Endothelial cell of umbilical vein (primary cell): ENCODE measurements at regions of chr11 and their contacts with region 1.

Region 1: GRCh38 chr11:13384908-13385640 is 77.9 kb downstream of the BTBD10 start:
- DNase-seq: peak; percentile 65
- H3K4me3 ChIP-seq: no peak overlapping the region
- H3K27ac ChIP-seq: no peak overlapping the region
- H3K4me1 ChIP-seq: no peaks in the 10 kb centered on the region
- H3K27me3 ChIP-seq: no peaks in the 10 kb centered on the region
- CTCF ChIP-seq: peak; percentile 50 to 58
- POLR2A ChIP-seq: no peak

Region 2: GRCh38 chr11:13183094-13183825 is 201.8 kb before region 1 on chr11:
- CTCF ChIA-PET with region 1: no interaction called
- POLR2A ChIA-PET with region 1: no interaction called
- dilution Hi-C with region 1: no loop called
- intact Hi-C with region 1: loop called (anchors 1 kb)
- DNase-seq: peak; percentile 56
- H3K4me3 ChIP-seq: no peak overlapping the region
- H3K27ac ChIP-seq: no peak overlapping the region
- H3K4me1 ChIP-seq: peaks cover 6% of the 10 kb centered on the region
- H3K27me3 ChIP-seq: peaks cover 8 to 12% of the 10 kb centered on the region in 2 experiments
- CTCF ChIP-seq: peak; percentile 34 to 46
- POLR2A ChIP-seq: no peak

Region 3: GRCh38 chr11:13249996-13250395 is 135.1 kb before region 1 on chr11:
- CTCF ChIA-PET with region 1: interaction called, 14 read pairs
- POLR2A ChIA-PET with region 1: no interaction called
- dilution Hi-C with region 1: no loop called
- intact Hi-C with region 1: no loop called
- DNase-seq: peak; percentile 3
- H3K4me3 ChIP-seq: no peak overlapping the region
- H3K27ac ChIP-seq: no peak overlapping the region
- H3K4me1 ChIP-seq: no peaks in the 10 kb centered on the region
- H3K27me3 ChIP-seq: peaks cover 24 to 25% of the 10 kb centered on the region in 2 experiments
- CTCF ChIP-seq: no peak
- POLR2A ChIP-seq: no peak

Region 4: DNA sequence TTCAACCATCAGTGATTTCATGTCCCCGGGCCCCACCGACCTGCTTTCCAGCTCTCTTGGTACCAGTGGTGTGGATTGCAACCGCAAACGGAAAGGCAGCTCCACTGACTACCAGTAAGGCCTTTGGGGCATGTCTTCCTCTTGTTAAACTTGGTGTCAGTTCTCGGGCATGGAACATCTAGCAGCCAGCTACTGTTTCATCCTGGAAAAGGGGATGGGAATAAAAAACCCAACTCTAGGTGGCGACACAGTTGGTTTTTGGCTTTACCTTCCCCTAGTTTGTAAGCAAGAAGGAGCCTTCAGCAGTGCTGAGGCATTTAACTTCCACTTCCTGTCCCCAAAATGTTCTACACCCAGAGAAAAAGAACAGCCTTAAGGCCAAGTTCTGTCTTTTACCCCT is 30.7 kb before region 1 on chr11:
- CTCF ChIA-PET with region 1: interaction called, 144 read pairs
- POLR2A ChIA-PET with region 1: no interaction called
- dilution Hi-C with region 1: no loop called
- intact Hi-C with region 1: loop called (anchors 1 kb)
- DNase-seq: peak; percentile 44
- H3K4me3 ChIP-seq: no peak overlapping the region
- H3K27ac ChIP-seq: no peak overlapping the region
- H3K4me1 ChIP-seq: no peaks in the 10 kb centered on the region
- H3K27me3 ChIP-seq: no peaks in the 10 kb centered on the region
- CTCF ChIP-seq: peak; percentile 45 to 46
- POLR2A ChIP-seq: no peak

Region 5: DNA sequence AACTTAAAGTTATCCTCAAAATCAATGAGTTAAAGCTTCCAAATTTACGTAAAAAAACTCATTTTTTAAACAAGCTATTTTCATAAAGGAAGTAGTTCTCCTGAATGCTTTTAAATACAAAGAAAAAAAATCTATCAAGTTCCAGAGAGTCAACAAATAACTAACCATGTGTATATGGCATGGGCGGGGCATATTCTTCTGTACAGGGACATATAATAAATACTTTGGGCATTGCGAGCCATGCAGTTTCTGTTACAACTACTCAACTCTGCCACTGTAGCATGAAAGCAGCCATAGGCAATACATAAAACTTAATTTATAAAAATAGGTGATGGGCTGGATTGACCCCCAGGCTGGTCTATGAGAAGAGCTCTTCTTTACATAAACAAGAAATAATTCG is 20.1 kb after region 1 on chr11:
- CTCF ChIA-PET with region 1: interaction called, 12 read pairs
- POLR2A ChIA-PET with region 1: no interaction called
- dilution Hi-C with region 1: no loop called
- intact Hi-C with region 1: no loop called
- DNase-seq: no peak
- H3K4me3 ChIP-seq: no peak overlapping the region
- H3K27ac ChIP-seq: no peak overlapping the region
- H3K4me1 ChIP-seq: no peaks in the 10 kb centered on the region
- H3K27me3 ChIP-seq: no peaks in the 10 kb centered on the region
- CTCF ChIP-seq: no peak
- POLR2A ChIP-seq: no peak